ENCODE measurements at regions of chr1 and their contacts with region 1.

Region 1: GRCh38 chr1:32939655-32940371 is 24.8 kb downstream of the RNF19B start:
- DNase-seq: no peak
- ATAC-seq: no peak
- H3K4me3 ChIP-seq: no peak overlapping the region
- H3K27ac ChIP-seq: no peak overlapping the region
- H3K4me1 ChIP-seq: no peaks in the 10 kb centered on the region
- H3K27me3 ChIP-seq: no peaks in the 10 kb centered on the region
- CTCF ChIP-seq: no peak
- EP300 ChIP-seq: no peak
- POLR2A ChIP-seq: no peak
- RAD21 ChIP-seq: no peak

Region 2: DNA sequence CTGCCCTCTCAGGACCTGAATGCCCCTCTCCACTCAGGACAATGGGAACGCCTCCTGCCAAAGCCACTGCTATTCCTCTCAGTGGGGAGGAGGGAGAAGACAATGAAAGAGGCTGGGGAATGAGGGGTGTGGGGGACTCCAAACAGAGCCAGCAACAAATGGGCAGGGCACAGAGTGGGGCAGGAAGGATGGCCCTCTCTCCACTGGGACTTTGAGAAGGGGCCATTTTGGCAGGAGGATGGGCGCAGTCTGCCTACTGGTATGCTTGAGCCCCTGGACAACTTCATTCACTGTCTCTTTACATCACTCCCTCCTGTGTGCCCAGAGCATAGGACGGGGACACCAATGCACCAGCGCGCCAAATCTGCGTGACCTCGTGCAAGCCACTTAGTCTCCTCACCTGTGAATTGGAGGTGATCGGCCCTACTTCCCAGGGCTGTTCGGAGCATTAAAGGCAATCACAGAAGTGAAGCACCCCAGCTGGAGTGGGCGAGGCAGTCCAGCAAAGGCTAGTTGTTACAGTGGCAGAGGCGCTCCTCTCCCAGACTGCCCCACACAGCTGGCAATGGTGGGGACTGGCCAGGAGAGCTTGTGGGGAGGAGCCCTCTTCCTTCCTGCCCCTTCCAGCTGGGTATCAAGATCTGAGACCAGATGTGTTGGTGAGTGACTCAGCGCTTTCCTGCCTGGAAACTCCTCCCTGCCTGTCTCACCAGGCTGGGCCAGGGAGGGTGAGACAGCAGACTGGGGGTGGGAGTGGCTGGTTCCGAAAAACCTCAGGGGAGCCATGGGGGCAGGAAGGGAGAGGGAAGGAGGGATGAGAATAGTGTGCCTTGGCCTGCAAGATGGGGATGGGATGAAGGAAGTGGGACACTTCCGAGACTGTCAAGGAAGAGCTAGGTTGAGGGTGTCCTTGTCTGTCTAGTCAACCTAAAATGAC is 214.9 kb before region 1 on chr1:
- CTCF ChIA-PET with region 1: no interaction called
- POLR2A ChIA-PET with region 1: no interaction called
- RAD21 ChIA-PET with region 1: no interaction called
- SMC1A ChIA-PET with region 1: no interaction called
- in situ Hi-C with region 1: no loop called
- intact Hi-C with region 1: no loop called
- DNase-seq: no peak
- ATAC-seq: peak; percentile 44
- H3K4me3 ChIP-seq: no peak overlapping the region
- H3K27ac ChIP-seq: no peak overlapping the region
- H3K4me1 ChIP-seq: peaks cover 8% of the 10 kb centered on the region
- H3K27me3 ChIP-seq: peaks cover 0 to 1% of the 10 kb centered on the region in 2 experiments; a peak in 1 of 4 replicates
- CTCF ChIP-seq: no peak
- EP300 ChIP-seq: no peak
- POLR2A ChIP-seq: no peak
- RAD21 ChIP-seq: no peak

Region 3: DNA sequence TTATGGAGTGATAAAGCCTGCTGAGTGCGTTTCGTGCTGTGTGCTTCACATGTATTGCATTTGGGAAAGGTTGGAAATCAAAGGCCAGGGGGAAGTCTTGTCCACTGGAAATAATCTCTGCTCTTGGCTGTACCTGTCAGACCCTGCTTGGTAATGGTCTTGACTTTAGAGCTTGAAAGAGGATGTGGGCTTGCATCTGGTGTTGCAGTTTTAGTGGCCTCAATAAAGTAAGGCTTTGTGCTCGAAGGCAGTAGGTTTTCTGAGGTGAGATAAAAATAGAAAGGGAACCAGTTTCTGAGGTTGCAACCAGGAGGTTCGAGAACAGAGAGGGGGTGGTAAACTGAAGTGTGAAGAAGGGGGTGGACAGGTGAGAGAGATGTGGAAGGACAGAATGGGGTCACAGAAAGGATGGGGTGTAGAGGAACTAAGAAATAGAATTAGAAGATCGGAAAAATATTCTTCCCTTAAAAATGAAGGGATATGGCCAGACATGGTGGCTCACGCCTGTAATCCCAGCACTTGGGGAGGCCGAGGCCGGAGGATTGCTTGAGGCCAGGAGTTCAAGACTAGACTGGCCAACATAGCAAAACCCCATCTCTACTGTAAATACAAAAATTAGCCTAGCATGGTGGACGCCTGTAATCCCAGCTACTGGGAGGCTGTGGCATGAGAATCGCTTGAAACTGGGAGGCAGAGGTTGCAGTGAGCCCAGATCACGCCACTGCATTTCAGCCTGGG is 120.8 kb before region 1 on chr1:
- CTCF ChIA-PET with region 1: no interaction called
- POLR2A ChIA-PET with region 1: no interaction called
- RAD21 ChIA-PET with region 1: no interaction called
- SMC1A ChIA-PET with region 1: no interaction called
- in situ Hi-C with region 1: no loop called
- intact Hi-C with region 1: no loop called
- DNase-seq: peak; percentile 96
- ATAC-seq: peak; percentile 70
- H3K4me3 ChIP-seq: peak overlapping the region; percentile 71
- H3K27ac ChIP-seq: peak overlapping the region; percentile 100
- H3K4me1 ChIP-seq: peaks cover 27% of the 10 kb centered on the region
- H3K27me3 ChIP-seq: no peaks in the 10 kb centered on the region
- CTCF ChIP-seq: no peak
- EP300 ChIP-seq: peak; percentile 96
- POLR2A ChIP-seq: peak; percentile 78
- RAD21 ChIP-seq: peak; percentile 8; the same call in 1 of the 2 replicates

Region 4: GRCh38 chr1:32848354-32849063 is 91.3 kb before region 1 on chr1:
- CTCF ChIA-PET with region 1: no interaction called
- POLR2A ChIA-PET with region 1: no interaction called
- RAD21 ChIA-PET with region 1: no interaction called
- SMC1A ChIA-PET with region 1: no interaction called
- in situ Hi-C with region 1: no loop called
- intact Hi-C with region 1: no loop called
- DNase-seq: no peak
- ATAC-seq: peak; percentile 95
- H3K4me3 ChIP-seq: no peak overlapping the region
- H3K27ac ChIP-seq: 0 out of 2 replicates have a peak overlapping the region, but pooled peaks have one; percentile 6
- H3K4me1 ChIP-seq: no peaks in the 10 kb centered on the region
- H3K27me3 ChIP-seq: no peaks in the 10 kb centered on the region
- CTCF ChIP-seq: no peak
- EP300 ChIP-seq: no peak
- POLR2A ChIP-seq: no peak
- RAD21 ChIP-seq: no peak

Region 5: DNA sequence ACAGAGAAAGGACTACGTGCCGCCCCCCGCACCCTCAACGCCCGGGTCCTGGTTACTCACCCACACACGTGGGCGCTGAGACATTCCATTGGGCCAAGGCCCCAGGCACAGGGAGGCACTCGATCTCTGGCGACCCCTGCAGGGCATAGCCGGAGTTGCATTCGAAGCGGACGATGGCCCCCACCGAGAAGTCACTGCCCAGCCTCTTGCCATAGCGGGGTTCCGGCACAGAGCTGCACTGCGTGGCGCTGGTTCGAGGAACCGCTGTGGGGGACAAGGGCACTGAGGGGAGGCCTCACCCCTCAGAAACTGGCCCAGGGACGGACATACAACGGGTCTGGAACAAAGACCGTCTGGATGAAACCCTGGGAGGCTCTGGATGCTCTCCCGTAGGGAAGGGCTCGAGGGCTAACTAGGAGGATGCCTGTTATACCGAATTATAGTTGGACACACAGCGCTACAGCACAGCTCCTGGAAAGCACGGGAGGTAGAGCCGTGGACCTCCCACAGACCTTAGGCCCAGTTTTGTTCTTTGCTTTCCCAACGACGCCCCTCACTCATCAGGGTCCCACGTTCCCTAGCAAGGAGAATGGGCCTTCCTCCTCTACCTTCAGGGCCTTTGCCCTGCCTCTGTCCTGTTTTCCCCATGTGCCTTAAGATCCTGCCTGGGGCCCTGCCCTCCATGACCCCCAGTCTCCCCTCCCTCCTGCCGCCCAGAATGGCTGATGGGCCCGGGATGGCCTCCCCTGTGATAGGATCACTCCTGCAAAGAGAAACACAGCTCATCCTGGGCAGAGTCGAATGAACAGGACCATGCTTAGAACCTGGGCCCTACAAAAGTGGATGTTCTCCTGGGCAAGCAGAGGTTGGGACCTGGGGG is 685.4 kb after region 1 on chr1:
- CTCF ChIA-PET with region 1: no interaction called
- POLR2A ChIA-PET with region 1: no interaction called
- RAD21 ChIA-PET with region 1: no interaction called
- SMC1A ChIA-PET with region 1: no interaction called
- in situ Hi-C with region 1: loop called (anchors 25 kb)
- intact Hi-C with region 1: no loop called
- DNase-seq: no peak
- ATAC-seq: peak; percentile 30; the same call in 1 of the 3 replicates
- H3K4me3 ChIP-seq: no peak overlapping the region
- H3K27ac ChIP-seq: no peak overlapping the region
- H3K4me1 ChIP-seq: no peaks in the 10 kb centered on the region
- H3K27me3 ChIP-seq: no peaks in the 10 kb centered on the region; a peak in 2 of 4 replicates
- CTCF ChIP-seq: peak; percentile 33 to 59 (median 42)
- EP300 ChIP-seq: no peak
- POLR2A ChIP-seq: no peak
- RAD21 ChIP-seq: no peak